Activated CD4-positive, alpha-beta memory T cell treated with anti-CD3 and anti-CD28 coated beads, Interleukin-2, amount 10 ng/mL, durations not matched to agents 7 days and 5 days (primary cell): ENCODE measurements at regions of chr17 and their contacts with region 1.

Region 1: DNA sequence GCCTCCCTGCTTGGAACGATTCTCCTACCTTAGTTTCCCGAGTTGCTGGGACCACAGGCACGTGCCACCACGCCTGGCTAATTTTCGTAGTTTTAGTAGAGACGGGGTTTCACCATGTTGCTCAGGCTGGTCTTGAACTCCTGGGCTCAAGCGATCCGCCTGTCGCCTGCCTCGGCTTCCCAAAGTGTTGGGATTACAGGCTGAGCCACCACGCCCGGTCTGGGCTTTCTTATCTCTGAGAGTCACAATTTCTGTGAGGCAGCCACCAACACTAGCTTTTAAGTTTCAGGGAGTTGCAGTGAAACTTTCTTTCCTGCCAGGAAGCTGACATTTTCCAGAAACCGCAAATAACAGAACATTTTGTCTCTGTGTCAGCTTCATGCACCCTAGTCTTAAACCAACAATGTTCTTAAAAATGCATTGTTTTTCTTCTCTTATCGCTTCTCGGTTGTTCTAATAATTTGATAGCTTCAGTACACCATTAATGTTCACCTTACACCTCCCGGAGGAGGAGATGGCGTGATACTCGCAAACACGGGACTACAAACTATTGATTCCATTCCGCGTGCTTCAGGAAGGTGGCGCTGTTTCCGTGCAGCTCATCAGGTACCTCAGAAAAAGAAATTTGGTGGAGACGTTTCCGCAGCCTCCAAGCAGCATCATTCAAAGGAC is 7.4 kb upstream of the DHRS7B start:
- DNase-seq: peak; percentile 76
- H3K4me3 Mint-ChIP-seq: no peak overlapping the region
- H3K27ac Mint-ChIP-seq: no peak overlapping the region
- H3K4me1 Mint-ChIP-seq: peaks cover 10% of the 10 kb centered on the region
- H3K27me3 Mint-ChIP-seq: peaks cover 4% of the 10 kb centered on the region

Region 2: DNA sequence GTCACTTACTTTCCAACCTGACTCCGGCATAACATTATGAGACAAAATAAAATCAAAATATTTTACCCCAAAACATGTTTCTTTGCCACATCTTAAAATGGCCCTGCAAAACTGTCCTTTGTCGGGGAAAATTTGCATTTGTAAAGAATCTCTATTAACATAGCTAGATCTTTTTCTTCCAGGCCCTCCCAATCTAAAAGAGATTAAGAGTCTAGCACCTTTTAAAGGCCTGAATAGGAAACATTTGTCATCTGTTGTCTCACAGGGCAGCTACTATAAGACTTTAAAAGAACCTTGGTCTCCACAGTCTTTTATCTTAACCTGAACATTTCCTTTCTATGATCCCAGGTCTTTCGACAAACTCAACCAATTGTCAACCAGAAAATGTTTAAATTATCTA is 10.7 kb before region 1 on chr17:
- CTCF ChIA-PET with region 1: interaction called, 17 read pairs
- POLR2A ChIA-PET with region 1: no interaction called
- DNase-seq: no peak
- H3K4me3 Mint-ChIP-seq: no peak overlapping the region
- H3K27ac Mint-ChIP-seq: no peak overlapping the region
- H3K4me1 Mint-ChIP-seq: no peaks in the 10 kb centered on the region
- H3K27me3 Mint-ChIP-seq: peaks cover 8% of the 10 kb centered on the region